Activated CD4-positive, alpha-beta T cell treated with anti-CD3 and anti-CD28 coated beads for 36 hours (primary cell): ENCODE measurements at regions of chr21 and their contacts with region 1.

Region 1: DNA sequence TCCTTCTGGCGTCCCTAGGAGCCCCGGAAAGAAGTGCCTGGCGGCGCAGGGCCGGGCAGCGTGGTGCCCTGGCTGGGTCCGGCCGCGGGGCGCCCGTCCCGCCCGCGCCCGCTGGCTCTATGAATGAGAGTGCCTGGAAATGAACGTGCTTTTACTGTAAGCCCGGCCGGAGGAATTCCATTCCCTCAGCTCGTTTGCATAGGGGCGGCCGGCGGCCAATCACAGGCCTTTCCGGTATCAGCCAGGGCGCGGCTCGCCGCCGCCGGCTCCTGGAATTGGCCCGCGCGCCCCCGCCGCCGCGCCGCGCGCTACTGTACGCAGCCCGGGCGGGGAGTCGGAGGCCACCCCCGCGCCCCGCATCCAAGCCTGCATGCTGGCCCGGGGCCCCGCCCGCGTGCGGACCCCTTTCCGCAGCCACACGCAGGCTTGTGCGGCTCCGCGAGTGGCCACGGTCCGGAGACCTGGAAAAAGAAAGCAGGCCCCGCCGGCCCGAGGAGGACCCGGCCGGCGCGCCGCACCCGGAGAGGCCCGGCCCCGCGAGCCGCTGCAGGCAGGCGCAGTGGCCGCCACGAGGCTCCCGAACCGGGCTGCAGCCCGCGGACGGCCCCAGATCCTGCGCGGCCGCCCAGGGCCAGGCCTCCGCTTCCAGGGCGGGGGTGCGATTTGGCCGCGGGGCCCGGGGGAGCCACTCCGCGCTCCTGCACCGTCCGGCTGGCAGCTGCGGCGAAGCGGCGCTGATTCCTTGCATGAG is 160.4 kb downstream of the RUNX1 start:
- DNase-seq: peak; percentile 93
- ATAC-seq: peak; percentile 56
- H3K4me3 Mint-ChIP-seq: peak overlapping the region; percentile 92
- H3K27ac Mint-ChIP-seq: peak overlapping the region; percentile 100
- H3K4me1 Mint-ChIP-seq: peaks cover 37% of the 10 kb centered on the region
- H3K27me3 Mint-ChIP-seq: no peaks in the 10 kb centered on the region

Region 2: GRCh38 chr21:34693192-34693810 is 195.4 kb before region 1 on chr21:
- CTCF ChIA-PET with region 1: no interaction called
- POLR2A ChIA-PET with region 1: no interaction called
- intact Hi-C with region 1: loop called (anchors 5 kb)
- DNase-seq: peak; percentile 71
- ATAC-seq: peak; percentile 60
- H3K4me3 Mint-ChIP-seq: no peak overlapping the region
- H3K27ac Mint-ChIP-seq: no peak overlapping the region
- H3K4me1 Mint-ChIP-seq: peaks cover 2% of the 10 kb centered on the region
- H3K27me3 Mint-ChIP-seq: peaks cover 13% of the 10 kb centered on the region

Region 3: DNA sequence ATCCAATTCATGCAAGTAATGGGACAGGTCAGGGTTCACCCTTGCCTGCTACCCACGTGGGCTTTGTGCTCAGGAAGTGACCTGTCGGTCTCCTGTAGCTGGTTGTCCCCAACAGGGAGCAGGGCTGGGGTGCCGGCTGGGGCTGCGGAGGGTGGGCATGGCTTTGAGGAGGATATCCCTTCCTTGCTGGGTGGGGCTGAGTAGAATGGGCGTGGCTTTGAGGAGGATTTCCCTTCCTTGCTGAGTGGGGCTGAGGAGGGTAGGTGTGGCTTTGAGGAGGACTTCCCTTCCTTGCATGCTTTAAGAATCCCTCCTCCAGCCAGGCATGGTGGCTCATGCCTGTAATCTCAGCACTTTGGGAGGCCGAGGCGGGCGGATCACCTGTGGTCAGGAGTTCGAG is 68.7 kb before region 1 on chr21:
- CTCF ChIA-PET with region 1: no interaction called
- POLR2A ChIA-PET with region 1: no interaction called
- intact Hi-C with region 1: no loop called
- DNase-seq: no peak
- ATAC-seq: no peak
- H3K4me3 Mint-ChIP-seq: no peak overlapping the region
- H3K27ac Mint-ChIP-seq: no peak overlapping the region
- H3K4me1 Mint-ChIP-seq: peaks cover 18% of the 10 kb centered on the region
- H3K27me3 Mint-ChIP-seq: no peaks in the 10 kb centered on the region

Region 4: GRCh38 chr21:34933609-34934335 is 45.0 kb after region 1 on chr21:
- CTCF ChIA-PET with region 1: interaction called, 7 read pairs
- POLR2A ChIA-PET with region 1: interaction called, 5 read pairs
- intact Hi-C with region 1: loop called (anchors 2 kb)
- DNase-seq: peak; percentile 40
- ATAC-seq: peak; percentile 85
- H3K4me3 Mint-ChIP-seq: peak overlapping the region; percentile 68
- H3K27ac Mint-ChIP-seq: peak overlapping the region; percentile 96
- H3K4me1 Mint-ChIP-seq: peaks cover 84% of the 10 kb centered on the region
- H3K27me3 Mint-ChIP-seq: no peaks in the 10 kb centered on the region

Region 5: DNA sequence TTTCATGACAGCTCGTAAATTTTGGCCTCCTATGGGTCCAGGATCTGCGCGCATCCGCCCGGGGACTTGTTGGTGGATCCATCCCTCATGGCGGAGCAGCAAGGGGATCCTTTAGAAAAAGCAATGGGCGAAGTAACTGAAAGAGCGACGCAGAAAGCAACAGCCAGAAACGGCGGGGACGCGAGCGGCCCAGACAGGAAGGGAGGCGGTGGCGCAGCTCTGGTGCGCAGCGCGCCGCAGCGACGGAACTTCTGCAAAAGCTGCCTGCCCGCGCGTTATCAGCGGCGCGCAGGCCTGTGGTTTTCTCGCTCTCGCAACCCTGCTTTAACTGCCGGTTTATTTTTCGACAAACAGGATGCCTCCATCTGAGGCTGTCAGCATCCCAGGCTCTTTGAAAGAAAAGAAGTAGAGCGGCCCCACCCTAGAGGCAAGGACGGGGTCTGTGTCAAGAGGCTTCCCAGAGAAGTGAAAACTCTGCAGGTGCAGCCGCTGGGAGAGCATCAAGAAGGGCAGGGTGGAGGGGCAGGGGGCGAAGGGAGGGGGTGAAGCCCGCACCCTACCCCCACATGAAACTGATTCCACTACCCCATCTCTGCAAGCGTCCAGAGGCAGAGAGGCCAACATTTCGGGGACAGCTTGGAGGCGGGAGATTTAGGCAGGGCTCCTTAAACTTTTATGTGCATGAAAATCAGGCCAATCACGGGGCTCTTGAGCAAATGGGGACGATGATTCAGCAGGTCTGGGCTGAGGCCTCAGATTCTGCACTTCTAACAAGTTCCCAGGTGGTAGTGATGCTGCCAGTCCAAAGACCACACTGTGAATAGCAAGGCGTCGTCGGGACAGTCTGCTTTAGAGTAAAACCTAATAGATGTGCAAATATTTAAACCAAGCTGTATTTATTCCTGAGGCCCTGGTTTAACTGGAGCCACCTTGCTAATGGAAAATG is 138.1 kb after region 1 on chr21:
- CTCF ChIA-PET with region 1: interaction called, 32 read pairs
- POLR2A ChIA-PET with region 1: interaction called, 6 read pairs
- intact Hi-C with region 1: loop called (anchors 1 to 2 kb)
- DNase-seq: peak; percentile 92
- ATAC-seq: peak; percentile 68
- H3K4me3 Mint-ChIP-seq: peak overlapping the region; percentile 75
- H3K27ac Mint-ChIP-seq: peak overlapping the region; percentile 97
- H3K4me1 Mint-ChIP-seq: peaks cover 88% of the 10 kb centered on the region
- H3K27me3 Mint-ChIP-seq: no peaks in the 10 kb centered on the region

Region 6: GRCh38 chr21:35226948-35227744 is 338.4 kb after region 1 on chr21:
- CTCF ChIA-PET with region 1: no interaction called
- POLR2A ChIA-PET with region 1: no interaction called
- intact Hi-C with region 1: loop called (anchors 2 to 10 kb)
- DNase-seq: peak; percentile 73
- ATAC-seq: peak; percentile 83
- H3K4me3 Mint-ChIP-seq: peak overlapping the region; percentile 45
- H3K27ac Mint-ChIP-seq: peak overlapping the region; percentile 85
- H3K4me1 Mint-ChIP-seq: peaks cover 37% of the 10 kb centered on the region
- H3K27me3 Mint-ChIP-seq: no peaks in the 10 kb centered on the region

Region 7: DNA sequence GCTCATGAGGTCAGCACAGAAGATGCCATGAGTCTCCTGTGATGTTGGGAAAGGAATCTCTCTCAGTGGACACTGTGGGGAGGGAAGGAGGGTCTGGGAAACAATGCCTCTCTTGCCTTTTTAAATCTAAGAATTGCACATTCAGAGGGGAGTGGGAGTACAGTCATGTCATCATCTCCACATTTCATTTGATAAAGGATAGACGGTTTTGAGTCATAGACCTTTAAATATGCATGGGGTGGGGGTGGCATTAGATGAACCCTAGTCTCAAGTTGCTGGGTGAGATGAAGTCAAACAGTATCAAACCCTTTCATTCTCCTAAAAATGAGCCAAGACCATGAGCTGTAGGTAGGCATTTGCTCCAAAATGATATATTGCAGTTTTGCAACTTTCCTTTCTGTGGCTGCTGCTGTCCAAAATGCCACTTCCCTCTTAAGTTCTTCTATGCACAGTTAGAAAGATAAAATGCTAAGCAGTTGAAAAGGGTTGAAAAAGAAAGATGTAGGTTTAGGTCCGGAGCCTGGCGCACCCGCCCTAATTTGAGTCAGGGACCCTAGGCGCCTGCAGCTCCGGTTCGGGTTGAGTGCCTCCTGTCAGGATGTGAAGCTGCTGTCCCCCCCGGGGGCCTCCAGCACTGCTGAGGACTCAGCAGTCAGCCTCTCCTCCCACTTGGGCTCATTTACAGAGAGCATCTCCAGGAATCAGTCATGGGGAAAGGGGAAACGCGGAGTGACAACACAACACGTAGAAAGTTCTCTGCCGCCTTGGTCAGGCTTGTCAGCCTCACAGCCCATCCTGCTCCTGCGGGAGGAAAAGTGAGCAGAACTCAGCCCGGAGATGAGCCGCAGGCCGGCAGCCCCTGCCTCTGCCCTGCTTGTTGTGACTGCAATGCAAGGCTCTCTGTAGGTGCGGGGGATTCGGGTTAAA is 639.6 kb after region 1 on chr21:
- CTCF ChIA-PET with region 1: no interaction called
- POLR2A ChIA-PET with region 1: no interaction called
- intact Hi-C with region 1: loop called in 1 of 2 experiments (anchors 5 kb)
- DNase-seq: peak; percentile 79
- ATAC-seq: peak; percentile 88
- H3K4me3 Mint-ChIP-seq: peak overlapping the region; percentile 75
- H3K27ac Mint-ChIP-seq: peak overlapping the region; percentile 93
- H3K4me1 Mint-ChIP-seq: peaks cover 44% of the 10 kb centered on the region
- H3K27me3 Mint-ChIP-seq: no peaks in the 10 kb centered on the region